Cardiac septum (tissue), 1 donor: ENCODE measurements at regions of chr1 and their contacts with region 1.

Region 1: DNA sequence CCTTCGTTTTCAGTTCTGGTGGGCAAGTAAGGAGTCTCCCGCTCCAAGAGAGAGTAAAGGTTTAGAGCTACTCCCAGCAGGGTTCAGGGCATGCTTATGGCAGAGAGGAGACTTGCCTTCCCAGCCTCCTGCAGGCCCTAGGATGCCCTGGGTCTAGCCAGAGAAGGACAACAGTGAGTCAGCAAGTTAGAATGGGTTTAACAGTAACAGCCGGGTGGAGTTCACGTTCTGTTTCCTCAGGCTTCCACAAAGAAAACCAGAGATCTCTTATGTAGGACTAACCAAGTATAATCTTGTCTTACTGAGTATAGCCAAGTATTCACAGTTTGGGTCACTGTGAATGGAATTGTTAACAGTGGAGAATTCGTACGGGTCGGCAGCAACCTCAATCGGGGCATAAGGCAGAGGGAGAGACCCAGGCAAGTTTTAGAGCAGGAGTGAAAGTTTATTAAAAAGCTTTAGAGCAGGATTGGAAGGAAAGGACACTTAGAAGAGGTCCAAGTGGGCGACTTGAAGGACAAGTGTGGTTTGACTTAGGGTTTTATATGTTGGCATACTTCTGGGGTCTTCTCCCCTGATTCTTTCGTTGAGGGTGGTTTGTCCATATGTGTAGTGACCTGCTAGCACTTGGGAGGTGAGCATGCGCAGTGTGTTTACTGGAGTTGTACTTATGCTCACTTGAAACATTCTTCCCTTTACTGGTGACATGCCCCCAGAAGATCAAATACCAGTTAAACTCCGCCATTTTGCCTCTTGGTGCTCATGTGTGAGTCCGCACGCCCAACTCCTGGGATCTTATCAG is 4.5 kb downstream of the OVAAL start:
- DNase-seq: no peak

Region 2: GRCh38 chr1:180533266-180533987 is 29.8 kb before region 1 on chr1:
- intact Hi-C with region 1: loop called (anchors 5 kb)
- DNase-seq: no peak

Region 3: DNA sequence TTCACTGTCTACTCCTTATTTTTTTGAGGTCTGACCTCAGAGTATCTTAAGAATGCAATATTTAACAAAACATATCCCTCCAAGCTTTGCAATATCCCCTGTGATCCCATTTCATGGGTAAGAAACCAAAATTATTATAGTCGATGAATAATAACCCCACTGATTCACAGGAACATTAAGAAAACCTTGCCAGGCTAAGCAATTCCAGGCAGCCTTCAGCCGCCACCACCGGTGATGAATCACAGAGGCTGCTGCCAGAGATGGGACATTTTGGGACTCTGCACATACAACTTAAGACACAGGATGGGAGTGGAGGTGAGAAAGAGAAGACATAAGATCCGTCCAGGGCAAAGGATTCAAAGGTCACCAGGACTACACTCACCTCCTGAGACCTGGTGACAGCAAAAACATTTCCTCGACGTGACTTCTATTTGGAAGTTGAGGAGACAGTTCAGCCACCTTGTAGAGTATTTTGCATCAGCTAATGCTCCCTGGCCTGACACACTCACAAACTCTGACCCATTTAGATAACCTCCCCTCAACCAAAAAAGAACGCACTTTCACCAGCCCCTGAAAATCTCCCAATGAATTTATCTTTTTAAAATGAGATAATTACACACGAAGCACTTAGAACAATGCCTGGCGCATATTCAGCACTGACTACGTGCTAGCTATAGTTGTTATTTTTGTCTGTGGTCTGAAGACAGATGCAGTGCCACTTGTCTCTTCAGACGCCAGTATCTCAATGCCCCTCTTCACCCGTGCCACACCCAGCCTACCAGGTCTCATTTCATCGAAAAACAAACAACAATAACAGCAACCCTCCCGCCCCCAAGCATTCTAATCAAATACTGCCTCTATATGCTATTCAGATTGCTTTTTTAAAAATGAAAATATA is 22.3 kb before region 1 on chr1:
- intact Hi-C with region 1: loop called (anchors 1 kb)
- DNase-seq: no peak

Region 4: GRCh38 chr1:180603223-180603849 is 40.1 kb after region 1 on chr1:
- intact Hi-C with region 1: loop called (anchors 5 kb)
- DNase-seq: peak; percentile 80

Region 5: GRCh38 chr1:180611016-180611930 is 48.0 kb after region 1 on chr1:
- intact Hi-C with region 1: loop called (anchors 2 kb)
- DNase-seq: no peak